Mammary epithelial cell (primary cell): ENCODE measurements at regions of chr1 and their contacts with region 1.

Region 1: GRCh38 chr1:9317591-9318417 is 25.1 kb downstream of the SPSB1 start:
- DNase-seq: no peak
- H3K4me3 ChIP-seq: no peak overlapping the region
- H3K27ac ChIP-seq: no peak overlapping the region
- H3K4me1 ChIP-seq: peaks cover 15% of the 10 kb centered on the region
- H3K27me3 ChIP-seq: no peaks in the 10 kb centered on the region
- CTCF ChIP-seq: no peak

Region 2: DNA sequence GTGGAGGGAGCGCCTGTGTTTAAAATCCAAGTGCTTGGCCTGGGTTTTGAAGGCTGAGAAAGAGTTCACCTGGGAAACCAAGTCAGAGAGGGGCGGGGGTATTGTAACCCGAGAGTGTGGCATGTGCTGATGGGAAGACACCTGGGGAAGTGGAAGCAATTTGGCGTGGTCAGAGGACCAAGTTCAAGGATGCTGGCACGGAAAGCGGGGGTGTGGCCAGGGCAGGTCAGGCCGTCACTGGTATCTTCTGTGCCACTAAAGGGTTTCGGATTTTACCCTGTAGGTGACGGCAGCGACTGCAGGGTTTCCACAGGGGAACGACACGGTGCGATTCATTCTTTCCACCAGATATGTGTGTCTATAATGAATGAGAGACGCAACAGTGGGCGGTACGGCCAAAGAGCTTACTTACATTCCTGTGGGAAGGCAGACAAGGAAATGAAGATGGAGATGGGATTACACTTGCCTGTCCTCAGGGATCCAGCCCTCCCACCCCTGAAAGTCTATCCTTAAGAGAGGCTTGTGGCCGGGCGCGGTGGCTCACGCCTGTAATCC is 340.8 kb before region 1 on chr1:
- CTCF ChIA-PET with region 1: no interaction called
- dilution Hi-C with region 1: no loop called
- in situ Hi-C with region 1: no loop called
- intact Hi-C with region 1: no loop called
- DNase-seq: no peak
- H3K4me3 ChIP-seq: no peak overlapping the region
- H3K27ac ChIP-seq: no peak overlapping the region
- H3K4me1 ChIP-seq: no peaks in the 10 kb centered on the region
- H3K27me3 ChIP-seq: no peaks in the 10 kb centered on the region
- CTCF ChIP-seq: no peak

Region 3: DNA sequence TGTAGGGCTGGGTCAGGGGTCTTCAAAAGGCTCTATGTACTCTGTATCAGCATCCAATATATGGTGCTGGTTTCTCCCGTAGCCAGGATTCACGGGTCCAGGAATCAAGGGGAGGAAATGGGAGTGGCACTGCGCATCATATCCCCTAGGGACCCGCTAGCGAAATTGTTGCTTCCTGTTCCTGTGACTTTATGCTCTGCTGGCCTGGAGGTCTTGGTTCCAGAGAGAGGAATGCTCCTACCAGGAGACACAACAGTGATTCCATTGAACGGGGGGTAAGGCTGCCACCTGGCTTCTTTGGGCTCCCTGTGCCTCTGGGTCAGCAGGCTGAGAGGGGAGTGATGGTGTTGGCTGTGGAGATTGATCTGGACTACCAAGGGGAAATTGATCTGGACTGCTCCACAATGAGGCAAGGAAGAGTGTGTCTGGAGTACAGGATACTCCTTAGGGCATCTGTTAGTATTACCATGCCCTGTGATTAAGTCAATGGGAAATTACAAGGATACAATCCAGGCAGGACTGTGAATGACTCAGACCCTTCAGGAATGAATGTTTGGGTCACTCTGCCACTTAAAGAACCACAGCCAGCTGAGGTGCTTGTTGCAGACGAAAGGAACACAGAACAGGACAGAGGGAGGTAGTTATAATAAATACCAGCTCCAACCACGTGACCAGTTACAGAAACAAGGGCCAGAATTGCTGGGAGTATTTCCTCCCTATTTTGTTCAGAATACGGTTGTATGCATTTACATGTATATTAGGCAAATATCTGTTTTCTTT is 14.9 kb before region 1 on chr1:
- CTCF ChIA-PET with region 1: no interaction called
- dilution Hi-C with region 1: no loop called
- in situ Hi-C with region 1: no loop called
- intact Hi-C with region 1: loop called (anchors 2 kb)
- DNase-seq: peak; percentile 93
- H3K4me3 ChIP-seq: no peak overlapping the region
- H3K27ac ChIP-seq: peak overlapping the region; percentile 66
- H3K4me1 ChIP-seq: peaks cover 38% of the 10 kb centered on the region
- H3K27me3 ChIP-seq: no peaks in the 10 kb centered on the region
- CTCF ChIP-seq: no peak

Region 4: GRCh38 chr1:9331558-9332346 is 13.9 kb after region 1 on chr1:
- CTCF ChIA-PET with region 1: no interaction called
- dilution Hi-C with region 1: no loop called
- in situ Hi-C with region 1: no loop called
- intact Hi-C with region 1: no loop called
- DNase-seq: no peak
- H3K4me3 ChIP-seq: no peak overlapping the region
- H3K27ac ChIP-seq: no peak overlapping the region
- H3K4me1 ChIP-seq: no peaks in the 10 kb centered on the region
- H3K27me3 ChIP-seq: no peaks in the 10 kb centered on the region
- CTCF ChIP-seq: no peak